Left lung (tissue), 14 donors: ENCODE measurements at regions of chr5 and their contacts with region 1.

Region 1: GRCh38 chr5:150217873-150218692 is 28.2 kb downstream of the SLC6A7 start:
- DNase-seq: peak; percentile 78 to 90 (median 84)
- ATAC-seq: peak; percentile 96
- H3K4me3 ChIP-seq: no peak overlapping the region
- H3K27ac ChIP-seq: no peak overlapping the region
- H3K4me1 ChIP-seq: no peaks in the 10 kb centered on the region
- H3K27me3 ChIP-seq: peaks cover 0 to 16% of the 10 kb centered on the region in 2 donors
- CTCF ChIP-seq: peak; percentile 90 to 95

Region 2: DNA sequence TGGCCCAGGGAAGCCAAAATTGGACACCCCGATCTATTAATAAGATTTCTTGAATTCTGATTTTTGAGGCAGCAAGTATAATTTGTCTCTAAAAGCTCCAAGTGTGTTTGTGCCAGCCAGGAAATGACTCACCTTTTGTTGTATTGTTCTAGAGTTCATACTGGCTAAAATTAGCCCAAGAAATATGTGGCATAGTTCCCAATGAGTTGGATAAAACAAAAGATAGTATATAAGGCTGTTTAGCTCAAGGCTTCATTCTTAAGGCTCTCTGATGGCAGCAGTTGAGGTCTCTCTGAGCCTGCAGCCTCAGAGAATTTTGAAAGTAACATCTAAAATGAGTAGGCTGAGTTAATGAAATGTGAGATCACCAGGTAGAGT is 195.9 kb before region 1 on chr5:
- intact Hi-C with region 1: no loop called
- DNase-seq: no peak
- ATAC-seq: peak; percentile 75
- H3K4me3 ChIP-seq: no peak overlapping the region
- H3K27ac ChIP-seq: peak overlapping the region; percentile 27 to 48
- H3K4me1 ChIP-seq: peaks cover 4 to 16% of the 10 kb centered on the region in 2 donors
- H3K27me3 ChIP-seq: no peaks in the 10 kb centered on the region
- CTCF ChIP-seq: no peak

Region 3: GRCh38 chr5:150131978-150132694 is 85.9 kb before region 1 on chr5:
- intact Hi-C with region 1: loop called in 1 of 2 experiments (anchors 2 kb)
- DNase-seq: no peak
- ATAC-seq: no peak
- H3K4me3 ChIP-seq: no peak overlapping the region
- H3K27ac ChIP-seq: no peak overlapping the region
- H3K4me1 ChIP-seq: peaks cover 7 to 12% of the 10 kb centered on the region in 2 donors
- H3K27me3 ChIP-seq: no peaks in the 10 kb centered on the region
- CTCF ChIP-seq: no peak

Region 4: GRCh38 chr5:150161242-150162141 is 56.6 kb before region 1 on chr5:
- intact Hi-C with region 1: loop called in 1 of 2 experiments (anchors 5 kb)
- DNase-seq: peak in 2 of 4 donors; percentile 70 to 93
- ATAC-seq: peak; percentile 87
- H3K4me3 ChIP-seq: no peak overlapping the region
- H3K27ac ChIP-seq: no peak overlapping the region
- H3K4me1 ChIP-seq: peaks cover 0 to 2% of the 10 kb centered on the region in 2 donors
- H3K27me3 ChIP-seq: peaks cover 0 to 24% of the 10 kb centered on the region in 2 donors
- CTCF ChIP-seq: peak; percentile 86 to 92